Caco-2 (cell line): ENCODE measurements at regions of chr3 and their contacts with region 1.

Region 1: GRCh38 chr3:67384760-67385397 is 269.5 kb downstream of the SUCLG2 start:
- DNase-seq: peak; percentile 39 to 44
- H3K4me3 ChIP-seq: no peak overlapping the region
- H3K4me3 Mint-ChIP-seq: no peak overlapping the region
- H3K27ac Mint-ChIP-seq: no peak overlapping the region
- H3K4me1 ChIP-seq: no peaks in the 10 kb centered on the region
- H3K4me1 Mint-ChIP-seq: no peaks in the 10 kb centered on the region
- H3K27me3 ChIP-seq: no peaks in the 10 kb centered on the region
- H3K27me3 Mint-ChIP-seq: no peaks in the 10 kb centered on the region
- CTCF ChIP-seq: peak; percentile 11 to 65

Region 2: GRCh38 chr3:67605377-67605776 is 220.5 kb after region 1 on chr3:
- CTCF ChIA-PET with region 1: no interaction called
- POLR2A ChIA-PET with region 1: no interaction called
- intact Hi-C with region 1: loop called (anchors 1 kb)
- DNase-seq: peak in 1 of 2 experiments; percentile 18
- H3K4me3 ChIP-seq: no peak overlapping the region
- H3K4me3 Mint-ChIP-seq: peak overlapping the region; percentile 33
- H3K27ac Mint-ChIP-seq: peak overlapping the region; percentile 55
- H3K4me1 ChIP-seq: peaks cover 9% of the 10 kb centered on the region; the same call in 1 of the 2 replicates
- H3K4me1 Mint-ChIP-seq: peaks cover 20% of the 10 kb centered on the region
- H3K27me3 ChIP-seq: no peaks in the 10 kb centered on the region
- H3K27me3 Mint-ChIP-seq: no peaks in the 10 kb centered on the region
- CTCF ChIP-seq: peak in 1 of 2 experiments; percentile 20

Region 3: DNA sequence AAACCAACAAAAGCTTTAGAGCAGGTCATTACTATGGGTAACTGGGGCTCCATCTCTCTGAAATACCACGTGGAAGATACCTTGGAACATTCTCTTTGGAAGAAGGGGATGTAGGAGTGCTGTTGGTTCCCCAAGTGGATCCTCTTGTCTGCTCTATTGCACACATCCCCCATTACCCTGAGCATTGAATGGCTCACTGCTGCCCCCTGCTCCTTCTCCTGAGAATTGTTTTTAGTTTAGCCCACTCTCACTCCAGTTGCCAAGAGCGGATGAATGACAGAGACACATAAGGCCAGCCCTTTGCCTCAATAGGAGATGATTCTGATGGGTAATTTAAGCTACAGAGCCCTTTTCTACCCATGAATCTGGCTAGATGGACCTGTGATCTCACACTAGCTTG is 405.2 kb after region 1 on chr3:
- CTCF ChIA-PET with region 1: no interaction called
- POLR2A ChIA-PET with region 1: no interaction called
- intact Hi-C with region 1: loop called (anchors 1 kb)
- DNase-seq: peak; percentile 41 to 66
- H3K4me3 ChIP-seq: no peak overlapping the region
- H3K4me3 Mint-ChIP-seq: no peak overlapping the region
- H3K27ac Mint-ChIP-seq: no peak overlapping the region
- H3K4me1 ChIP-seq: no peaks in the 10 kb centered on the region
- H3K4me1 Mint-ChIP-seq: peaks cover 9% of the 10 kb centered on the region
- H3K27me3 ChIP-seq: no peaks in the 10 kb centered on the region
- H3K27me3 Mint-ChIP-seq: peaks cover 4% of the 10 kb centered on the region
- CTCF ChIP-seq: peak; percentile 62 to 65

Region 4: GRCh38 chr3:67863869-67864268 is 479.0 kb after region 1 on chr3:
- CTCF ChIA-PET with region 1: no interaction called
- POLR2A ChIA-PET with region 1: no interaction called
- intact Hi-C with region 1: loop called (anchors 5 kb)
- DNase-seq: peak; percentile 31 to 44
- H3K4me3 ChIP-seq: no peak overlapping the region
- H3K4me3 Mint-ChIP-seq: no peak overlapping the region
- H3K27ac Mint-ChIP-seq: no peak overlapping the region
- H3K4me1 ChIP-seq: no peaks in the 10 kb centered on the region
- H3K4me1 Mint-ChIP-seq: no peaks in the 10 kb centered on the region
- H3K27me3 ChIP-seq: no peaks in the 10 kb centered on the region; the same call in 1 of the 2 replicates
- H3K27me3 Mint-ChIP-seq: no peaks in the 10 kb centered on the region
- CTCF ChIP-seq: peak; percentile 39 to 61

Region 5: DNA sequence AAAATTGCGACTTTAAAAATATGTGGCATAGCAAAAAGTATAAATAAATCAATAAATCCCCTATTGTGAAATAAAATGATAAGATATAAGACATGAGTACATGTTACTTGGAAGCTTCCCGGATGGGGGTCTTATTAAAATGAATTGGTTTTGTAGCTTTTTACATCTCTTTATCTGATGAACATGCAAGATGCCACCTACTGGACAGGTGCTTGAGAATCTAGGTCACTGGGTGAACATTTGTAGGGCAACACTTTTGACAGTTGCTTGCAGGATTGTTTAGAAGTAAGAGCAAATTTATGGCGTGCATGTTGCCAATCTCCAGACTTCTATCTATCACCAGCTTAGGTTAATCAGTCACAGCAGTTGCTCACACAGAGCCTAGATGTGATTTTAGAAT is 632.2 kb after region 1 on chr3:
- CTCF ChIA-PET with region 1: no interaction called
- POLR2A ChIA-PET with region 1: no interaction called
- intact Hi-C with region 1: loop called (anchors 10 kb)
- DNase-seq: no peak
- H3K4me3 ChIP-seq: no peak overlapping the region
- H3K4me3 Mint-ChIP-seq: no peak overlapping the region
- H3K27ac Mint-ChIP-seq: no peak overlapping the region
- H3K4me1 ChIP-seq: no peaks in the 10 kb centered on the region
- H3K4me1 Mint-ChIP-seq: no peaks in the 10 kb centered on the region
- H3K27me3 ChIP-seq: no peaks in the 10 kb centered on the region
- H3K27me3 Mint-ChIP-seq: no peaks in the 10 kb centered on the region
- CTCF ChIP-seq: peak; percentile 11 to 28

Region 6: GRCh38 chr3:68876112-68876713 is 1491.3 kb after region 1 on chr3:
- CTCF ChIA-PET with region 1: no interaction called
- POLR2A ChIA-PET with region 1: no interaction called
- intact Hi-C with region 1: loop called (anchors 10 kb)
- DNase-seq: peak in 1 of 2 experiments; percentile 56
- H3K4me3 ChIP-seq: no peak overlapping the region
- H3K4me3 Mint-ChIP-seq: no peak overlapping the region
- H3K27ac Mint-ChIP-seq: no peak overlapping the region
- H3K4me1 ChIP-seq: no peaks in the 10 kb centered on the region
- H3K4me1 Mint-ChIP-seq: no peaks in the 10 kb centered on the region
- H3K27me3 ChIP-seq: no peaks in the 10 kb centered on the region; the same call in 1 of the 2 replicates
- H3K27me3 Mint-ChIP-seq: peaks cover 4% of the 10 kb centered on the region
- CTCF ChIP-seq: peak; percentile 79 to 84